CD4-positive, alpha-beta memory T cell (primary cell): ENCODE measurements at regions of chr1 and their contacts with region 1.

Region 1: DNA sequence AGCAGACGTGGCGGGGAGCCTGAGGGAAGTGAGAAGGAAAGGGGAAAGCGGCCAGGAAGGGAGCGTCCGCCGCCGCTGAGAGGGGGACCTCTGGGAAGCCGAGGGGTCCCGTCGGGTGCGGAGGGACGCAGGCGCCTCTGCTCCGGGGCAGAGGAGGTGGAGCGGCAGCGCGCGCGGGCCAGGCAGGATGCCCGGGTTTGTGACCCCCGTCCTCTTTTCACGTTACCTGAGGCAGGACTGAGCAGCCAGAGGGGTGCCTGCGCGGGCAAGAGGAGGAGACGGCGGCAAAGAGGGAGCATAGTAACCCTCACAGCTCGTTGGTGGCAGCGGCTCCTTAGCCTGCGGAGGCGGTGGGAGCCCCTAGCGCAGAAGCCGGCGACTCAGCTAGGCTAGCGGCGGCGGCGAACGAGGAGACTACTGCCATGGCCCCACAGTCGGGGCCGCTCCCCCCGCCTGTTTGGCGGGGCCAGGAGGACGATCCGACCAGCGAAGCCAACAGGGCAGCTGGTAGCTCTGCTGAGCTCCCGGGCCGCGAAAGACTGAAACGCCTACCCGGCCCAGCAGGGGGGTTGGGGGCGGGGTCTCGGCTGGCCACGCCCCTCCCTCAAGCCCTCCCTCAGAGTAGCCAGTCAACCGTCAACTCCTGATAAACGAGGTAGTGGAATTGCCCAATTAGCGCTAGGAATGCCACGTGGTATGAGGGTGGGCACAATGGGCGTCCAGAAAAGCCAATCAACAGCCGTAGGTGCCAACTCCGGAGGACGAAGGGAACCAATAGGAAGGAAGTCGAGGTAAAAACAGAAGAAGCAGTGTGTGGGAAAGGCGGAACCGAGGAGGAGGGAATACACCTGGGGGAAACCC is at the start of gene TESK2:
- DNase-seq: peak; percentile 97 to 100 (median 99)
- H3K4me3 ChIP-seq: peak within 1 kb of the TSS; percentile 71 to 79
- H3K4me3 Mint-ChIP-seq: no peak within 1 kb of the TSS
- H3K27ac ChIP-seq: peak within 1 kb of the TSS; percentile 68
- H3K27ac Mint-ChIP-seq: no peak within 1 kb of the TSS
- H3K4me1 ChIP-seq: peaks cover 22% of the 10 kb centered on the region
- H3K4me1 Mint-ChIP-seq: peaks cover 5 to 13% (median 10%) of the 10 kb centered on the region in 4 donors
- H3K27me3 ChIP-seq: no peaks in the 10 kb centered on the region
- H3K27me3 Mint-ChIP-seq: no peaks in the 10 kb centered on the region
- total RNA-seq, gene TESK2: 7.5 to 7.7 TPM

Region 2: GRCh38 chr1:44707959-44708831 is 782.7 kb before region 1 on chr1:
- CTCF ChIA-PET with region 1: interaction called, 6 read pairs
- POLR2A ChIA-PET with region 1: no interaction called
- intact Hi-C with region 1: loop called (anchors 1 kb)
- DNase-seq: peak; percentile 39 to 62 (median 54)
- H3K4me3 ChIP-seq: no peak overlapping the region
- H3K4me3 Mint-ChIP-seq: peak overlapping the region; percentile 21 to 73 (median 58)
- H3K27ac ChIP-seq: no peak overlapping the region
- H3K27ac Mint-ChIP-seq: peak overlapping the region in 4 of 7 donors; percentile 5 to 64 (median 36)
- H3K4me1 ChIP-seq: peaks cover 11% of the 10 kb centered on the region
- H3K4me1 Mint-ChIP-seq: peaks cover 4 to 15% (median 5%) of the 10 kb centered on the region in 4 donors
- H3K27me3 ChIP-seq: no peaks in the 10 kb centered on the region
- H3K27me3 Mint-ChIP-seq: peaks cover 0 to 5% of the 10 kb centered on the region in 2 donors

Region 3: DNA sequence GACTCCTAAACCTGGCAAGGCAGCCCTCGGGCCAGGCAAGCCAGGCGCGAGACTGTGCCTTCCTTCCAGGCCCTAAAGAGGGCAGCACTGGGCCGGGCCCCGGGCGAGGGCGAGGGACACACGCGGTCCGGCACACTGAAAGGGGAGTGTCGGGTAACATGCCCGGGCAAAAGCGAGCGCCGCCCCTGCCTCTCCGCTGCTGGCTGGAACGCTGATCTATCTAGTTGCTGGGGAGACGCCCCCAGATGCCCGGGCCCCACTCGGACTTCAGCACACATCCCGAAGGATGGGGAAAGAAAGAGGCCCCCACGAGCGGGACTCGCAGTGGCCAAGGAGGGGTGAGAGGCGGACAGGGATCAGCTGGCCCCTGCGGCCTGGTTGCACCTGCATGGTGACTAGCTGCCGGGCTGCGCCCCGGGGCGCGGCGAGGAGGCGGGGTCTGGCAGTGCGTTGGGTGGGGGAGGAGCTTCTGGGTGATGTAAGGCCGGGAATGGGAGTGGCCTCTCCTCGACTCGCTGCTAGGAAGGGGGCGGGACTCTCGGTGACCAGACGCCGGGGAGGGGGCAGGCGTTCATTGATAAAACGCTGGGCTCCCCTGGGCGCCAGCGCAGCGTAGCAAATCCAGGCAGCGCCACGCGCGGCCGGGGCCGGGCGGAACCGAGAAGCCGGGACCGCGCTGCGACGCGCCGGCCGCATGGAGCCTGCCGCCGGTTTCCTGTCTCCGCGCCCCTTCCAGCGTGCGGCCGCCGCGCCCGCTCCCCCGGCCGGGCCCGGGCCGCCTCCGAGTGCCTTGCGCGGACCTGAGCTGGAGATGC is 690.9 kb before region 1 on chr1 and contains the start of gene PLK3:
- CTCF ChIA-PET with region 1: no interaction called
- POLR2A ChIA-PET with region 1: interaction called, 3 read pairs
- intact Hi-C with region 1: loop called (anchors 5 kb)
- DNase-seq: peak; percentile 99 to 100 (median 99)
- H3K4me3 ChIP-seq: peak within 1 kb of the TSS; percentile 77 to 83
- H3K4me3 Mint-ChIP-seq: peak within 1 kb of the TSS; percentile 89 to 99 (median 96)
- H3K27ac ChIP-seq: peak within 1 kb of the TSS; percentile 96
- H3K27ac Mint-ChIP-seq: peak within 1 kb of the TSS; percentile 82 to 100 (median 99)
- H3K4me1 ChIP-seq: peaks cover 37% of the 10 kb centered on the region
- H3K4me1 Mint-ChIP-seq: peaks cover 23 to 48% (median 31%) of the 10 kb centered on the region in 4 donors
- H3K27me3 ChIP-seq: no peaks in the 10 kb centered on the region
- H3K27me3 Mint-ChIP-seq: no peaks in the 10 kb centered on the region
- total RNA-seq, gene PLK3: 151 to 153 TPM

Region 4: GRCh38 chr1:45205910-45206721 is 284.7 kb before region 1 on chr1 and contains the start of gene ZSWIM5:
- CTCF ChIA-PET with region 1: no interaction called
- POLR2A ChIA-PET with region 1: no interaction called
- intact Hi-C with region 1: loop called (anchors 10 kb)
- DNase-seq: peak; percentile 63 to 77 (median 75)
- H3K4me3 ChIP-seq: peak within 1 kb of the TSS; percentile 1 to 58
- H3K4me3 Mint-ChIP-seq: peak within 1 kb of the TSS; percentile 93 to 97 (median 95)
- H3K27ac ChIP-seq: peak within 1 kb of the TSS; percentile 31
- H3K27ac Mint-ChIP-seq: peak within 1 kb of the TSS; percentile 85 to 93 (median 90)
- H3K4me1 ChIP-seq: peaks cover 22% of the 10 kb centered on the region
- H3K4me1 Mint-ChIP-seq: peaks cover 17 to 33% (median 26%) of the 10 kb centered on the region in 4 donors
- H3K27me3 ChIP-seq: no peaks in the 10 kb centered on the region
- H3K27me3 Mint-ChIP-seq: peaks cover 1% of the 10 kb centered on the region in 2 donors
- total RNA-seq, gene ZSWIM5: 3.4 to 3.7 TPM

Region 5: GRCh38 chr1:45521398-45522323 is 30.8 kb after region 1 on chr1 and contains the start of gene PRDX1:
- CTCF ChIA-PET with region 1: interaction called, 4 read pairs
- POLR2A ChIA-PET with region 1: interaction called, 53 read pairs
- intact Hi-C with region 1: no loop called
- DNase-seq: peak; percentile 95
- H3K4me3 ChIP-seq: peak within 1 kb of the TSS; percentile 90 to 94
- H3K4me3 Mint-ChIP-seq: peak within 1 kb of the TSS; percentile 93 to 97 (median 96)
- H3K27ac ChIP-seq: peak within 1 kb of the TSS; percentile 87
- H3K27ac Mint-ChIP-seq: peak within 1 kb of the TSS; percentile 85 to 97 (median 93)
- H3K4me1 ChIP-seq: peaks cover 25% of the 10 kb centered on the region
- H3K4me1 Mint-ChIP-seq: peaks cover 17 to 41% (median 29%) of the 10 kb centered on the region in 4 donors
- H3K27me3 ChIP-seq: no peaks in the 10 kb centered on the region
- H3K27me3 Mint-ChIP-seq: no peaks in the 10 kb centered on the region
- total RNA-seq, gene PRDX1: 130 to 145 TPM

Region 6: DNA sequence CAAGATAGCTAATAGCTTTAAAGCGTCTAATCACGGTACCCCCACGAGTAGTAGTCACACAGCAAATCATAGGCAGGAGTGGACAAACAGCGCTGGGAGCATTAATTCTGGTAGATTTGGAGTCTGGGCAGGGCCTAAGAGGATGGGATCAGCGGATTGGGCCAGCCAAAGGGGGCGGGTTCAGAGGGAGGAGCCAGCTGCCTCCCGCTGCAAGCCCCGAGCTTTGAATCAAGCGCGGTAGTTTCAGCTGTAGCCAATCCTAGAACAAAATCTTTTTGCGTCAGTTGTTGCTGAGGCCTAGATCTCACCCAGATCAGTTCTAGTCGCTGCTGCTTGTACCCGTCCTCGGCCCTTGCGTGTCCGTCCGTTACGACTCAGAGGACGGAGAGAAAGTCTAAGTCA is 92.4 kb after region 1 on chr1:
- CTCF ChIA-PET with region 1: interaction called, 3 read pairs
- POLR2A ChIA-PET with region 1: interaction called, 16 read pairs
- intact Hi-C with region 1: no loop called
- DNase-seq: peak; percentile 95 to 97 (median 96)
- H3K4me3 ChIP-seq: peak overlapping the region; percentile 99
- H3K4me3 Mint-ChIP-seq: peak overlapping the region; percentile 93 to 100 (median 100)
- H3K27ac ChIP-seq: peak overlapping the region; percentile 88
- H3K27ac Mint-ChIP-seq: peak overlapping the region; percentile 94 to 100 (median 99)
- H3K4me1 ChIP-seq: peaks cover 26% of the 10 kb centered on the region
- H3K4me1 Mint-ChIP-seq: peaks cover 20 to 42% (median 28%) of the 10 kb centered on the region in 4 donors
- H3K27me3 ChIP-seq: no peaks in the 10 kb centered on the region
- H3K27me3 Mint-ChIP-seq: no peaks in the 10 kb centered on the region

Region 7: GRCh38 chr1:45669859-45670655 is 179.2 kb after region 1 on chr1:
- CTCF ChIA-PET with region 1: no interaction called
- POLR2A ChIA-PET with region 1: no interaction called
- intact Hi-C with region 1: no loop called
- DNase-seq: no peak
- H3K4me3 ChIP-seq: no peak overlapping the region
- H3K4me3 Mint-ChIP-seq: peak overlapping the region in 1 of 8 donors; percentile 8
- H3K27ac ChIP-seq: no peak overlapping the region
- H3K27ac Mint-ChIP-seq: peak overlapping the region in 6 of 7 donors; percentile 15 to 59 (median 28)
- H3K4me1 ChIP-seq: peaks cover 60% of the 10 kb centered on the region
- H3K4me1 Mint-ChIP-seq: peaks cover 44 to 79% (median 62%) of the 10 kb centered on the region in 4 donors
- H3K27me3 ChIP-seq: no peaks in the 10 kb centered on the region
- H3K27me3 Mint-ChIP-seq: no peaks in the 10 kb centered on the region